Tibial artery (tissue), 4 donors: ENCODE measurements at regions of chr5 and their contacts with region 1.

Region 1: DNA sequence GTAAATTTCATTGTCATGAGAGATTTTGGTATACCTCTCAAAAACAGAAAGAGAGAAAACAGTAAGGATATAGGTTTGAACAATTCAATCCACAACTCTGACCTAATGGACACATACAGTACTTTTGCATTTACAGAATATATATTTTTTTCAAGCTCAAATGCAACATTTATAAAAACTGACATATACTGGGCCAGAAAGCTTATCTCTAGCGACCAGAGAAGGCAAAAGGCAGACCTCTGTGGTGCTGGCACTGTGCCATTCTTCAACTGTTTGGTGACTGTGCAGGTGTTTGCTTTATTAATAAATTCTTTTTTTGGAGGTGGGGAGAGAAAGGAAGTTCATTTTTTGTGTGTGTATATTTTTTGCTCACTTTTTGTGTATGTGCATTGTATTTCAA is 6.0 kb upstream of the PLAC8L1 start:
- DNase-seq: no peak
- H3K4me3 ChIP-seq: no peak overlapping the region
- H3K27ac ChIP-seq: no peak overlapping the region
- H3K4me1 ChIP-seq: no peaks in the 10 kb centered on the region
- H3K27me3 ChIP-seq: no peaks in the 10 kb centered on the region
- CTCF ChIP-seq: no peak

Region 2: DNA sequence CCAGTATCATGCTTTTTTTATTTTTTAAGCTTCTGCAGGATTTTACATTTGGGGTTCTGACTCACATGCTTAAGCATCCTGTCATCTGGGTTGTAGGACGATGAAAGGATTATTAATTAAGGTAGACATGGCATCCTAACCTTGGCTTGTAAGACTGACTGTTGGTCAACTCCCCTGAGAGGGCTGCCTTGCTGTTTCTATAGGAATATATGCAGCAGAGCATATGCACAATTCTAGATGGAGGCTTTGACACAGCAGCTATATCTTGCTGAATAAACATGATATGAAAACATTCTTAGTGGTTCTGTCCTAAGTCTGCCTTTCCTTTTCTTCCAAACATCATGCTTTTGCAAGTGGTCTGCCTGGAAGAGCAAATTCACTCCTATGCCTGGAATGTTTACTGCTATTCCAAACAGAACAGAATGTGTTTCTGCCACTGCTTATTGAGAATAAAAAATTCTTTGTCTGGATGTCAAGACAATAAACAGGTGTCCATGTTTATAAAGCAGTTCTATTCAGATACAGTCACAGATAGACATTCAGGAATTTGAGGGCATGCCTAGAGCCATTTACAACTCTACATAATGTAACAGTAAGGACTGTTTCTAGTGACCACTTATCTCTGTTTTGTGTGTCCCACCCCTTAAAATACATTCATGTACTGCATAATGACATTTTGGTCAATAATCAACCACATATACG is 933.3 kb after region 1 on chr5:
- intact Hi-C with region 1: loop called (anchors 5 kb)
- DNase-seq: no peak
- H3K4me3 ChIP-seq: no peak overlapping the region
- H3K27ac ChIP-seq: no peak overlapping the region
- H3K4me1 ChIP-seq: no peaks in the 10 kb centered on the region
- H3K27me3 ChIP-seq: no peaks in the 10 kb centered on the region
- CTCF ChIP-seq: no peak